Calu3 (cell line): ENCODE measurements at regions of chr12 and their contacts with region 1.

Region 1: GRCh38 chr12:68521321-68521839 is 89.3 kb upstream of the RAP1B start:
- DNase-seq: peak; percentile 21
- H3K4me3 Mint-ChIP-seq: peak overlapping the region; percentile 21
- H3K27ac Mint-ChIP-seq: peak overlapping the region; percentile 84
- H3K4me1 Mint-ChIP-seq: peaks cover 14% of the 10 kb centered on the region
- H3K27me3 Mint-ChIP-seq: no peaks in the 10 kb centered on the region
- CTCF ChIP-seq: no peak

Region 2: GRCh38 chr12:68102163-68102562 is 419.2 kb before region 1 on chr12:
- CTCF ChIA-PET with region 1: interaction called, 14 read pairs
- intact Hi-C with region 1: no loop called
- DNase-seq: no peak
- H3K4me3 Mint-ChIP-seq: no peak overlapping the region
- H3K27ac Mint-ChIP-seq: no peak overlapping the region
- H3K4me1 Mint-ChIP-seq: no peaks in the 10 kb centered on the region
- H3K27me3 Mint-ChIP-seq: peaks cover 40% of the 10 kb centered on the region
- CTCF ChIP-seq: no peak

Region 3: GRCh38 chr12:68317047-68317667 is 204.2 kb before region 1 on chr12:
- CTCF ChIA-PET with region 1: no interaction called
- intact Hi-C with region 1: no loop called
- DNase-seq: peak; percentile 35
- H3K4me3 Mint-ChIP-seq: no peak overlapping the region
- H3K27ac Mint-ChIP-seq: no peak overlapping the region
- H3K4me1 Mint-ChIP-seq: no peaks in the 10 kb centered on the region
- H3K27me3 Mint-ChIP-seq: no peaks in the 10 kb centered on the region
- CTCF ChIP-seq: no peak

Region 4: DNA sequence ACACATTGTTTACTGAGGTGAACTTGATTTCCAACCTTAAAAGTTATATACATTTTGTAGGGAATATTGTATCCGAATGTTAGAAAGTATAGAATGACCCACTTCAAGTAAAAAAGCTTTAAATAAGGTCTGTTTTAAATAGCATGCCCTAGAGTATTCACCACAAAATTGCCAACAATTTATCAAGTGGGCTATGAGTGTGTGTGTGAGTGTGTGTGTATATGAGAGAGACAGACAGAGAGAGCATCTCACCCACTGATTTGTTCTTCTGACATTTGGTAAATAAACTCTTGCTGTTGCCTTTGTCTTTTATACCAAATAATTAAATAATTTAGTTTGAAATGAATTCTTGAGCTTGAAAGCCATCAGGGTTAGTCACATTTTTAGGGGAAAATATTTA is 59.5 kb after region 1 on chr12:
- CTCF ChIA-PET with region 1: no interaction called
- intact Hi-C with region 1: no loop called
- DNase-seq: no peak
- H3K4me3 Mint-ChIP-seq: no peak overlapping the region
- H3K27ac Mint-ChIP-seq: no peak overlapping the region
- H3K4me1 Mint-ChIP-seq: peaks cover 9% of the 10 kb centered on the region
- H3K27me3 Mint-ChIP-seq: no peaks in the 10 kb centered on the region
- CTCF ChIP-seq: no peak

Region 5: GRCh38 chr12:69097619-69098368 is 576.4 kb after region 1 on chr12:
- CTCF ChIA-PET with region 1: no interaction called
- intact Hi-C with region 1: no loop called
- DNase-seq: no peak
- H3K4me3 Mint-ChIP-seq: no peak overlapping the region
- H3K27ac Mint-ChIP-seq: no peak overlapping the region
- H3K4me1 Mint-ChIP-seq: no peaks in the 10 kb centered on the region
- H3K27me3 Mint-ChIP-seq: peaks cover 10% of the 10 kb centered on the region
- CTCF ChIP-seq: no peak